CD8-positive, alpha-beta T cell (primary cell): ENCODE measurements at regions of chr10 and their contacts with region 1.

Region 1: GRCh38 chr10:70221030-70221429 is 12.2 kb downstream of the PPA1 start:
- DNase-seq: peak in 1 of 9 experiments; percentile 9
- ATAC-seq: no peak
- H3K4me3 ChIP-seq: no peak overlapping the region
- H3K4me3 Mint-ChIP-seq: no peak overlapping the region
- H3K27ac ChIP-seq: peak overlapping the region in 1 of 2 experiments; percentile 36
- H3K27ac Mint-ChIP-seq: peak overlapping the region; percentile 55
- H3K4me1 ChIP-seq: peaks cover 4% of the 10 kb centered on the region
- H3K4me1 Mint-ChIP-seq: peaks cover 14% of the 10 kb centered on the region
- H3K27me3 ChIP-seq: no peaks in the 10 kb centered on the region
- H3K27me3 Mint-ChIP-seq: no peaks in the 10 kb centered on the region
- CTCF ChIP-seq: no peak

Region 2: DNA sequence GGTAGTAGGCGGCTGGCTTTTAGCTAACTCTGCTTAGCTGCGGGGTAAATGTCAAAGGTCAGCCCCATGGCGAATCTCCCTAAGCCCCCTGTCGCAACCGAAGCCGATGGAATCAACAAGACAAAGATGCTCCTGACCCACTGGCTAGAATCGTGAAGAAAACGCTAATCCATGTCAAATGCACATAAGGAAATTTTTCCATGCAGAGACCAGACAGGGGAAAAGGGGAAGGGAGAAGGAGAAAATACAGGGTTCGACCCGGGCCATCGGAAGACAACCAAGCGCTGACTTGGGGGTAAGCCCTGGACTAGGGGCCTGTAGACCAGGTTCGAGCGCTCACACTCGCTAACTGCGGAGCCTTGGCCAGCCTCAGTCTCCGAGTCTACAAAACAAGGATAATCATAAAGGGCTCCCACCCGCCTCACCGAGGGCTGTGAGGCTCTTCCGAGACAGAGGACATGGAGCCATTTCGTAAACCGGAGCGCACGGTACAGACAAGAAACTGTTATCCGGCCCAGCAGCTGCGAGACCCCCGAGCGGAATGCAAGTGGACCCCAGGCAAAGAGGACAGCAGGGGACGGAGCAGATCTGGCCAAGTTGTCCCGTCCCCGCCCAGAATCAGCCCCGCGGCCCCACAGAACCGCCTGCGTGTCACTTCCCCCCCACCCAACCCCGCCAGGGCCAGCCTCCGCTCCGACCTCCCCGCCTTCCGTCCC is 51.2 kb before region 1 on chr10:
- CTCF ChIA-PET with region 1: interaction called, 10 read pairs
- POLR2A ChIA-PET with region 1: no interaction called
- intact Hi-C with region 1: no loop called
- DNase-seq: peak in 3 of 9 experiments; percentile 28 to 51 (median 29)
- ATAC-seq: peak; percentile 13
- H3K4me3 ChIP-seq: peak overlapping the region; percentile 65 to 90
- H3K4me3 Mint-ChIP-seq: peak overlapping the region; percentile 94
- H3K27ac ChIP-seq: peak overlapping the region; percentile 83 to 94
- H3K27ac Mint-ChIP-seq: peak overlapping the region; percentile 97
- H3K4me1 ChIP-seq: peaks cover 57% of the 10 kb centered on the region
- H3K4me1 Mint-ChIP-seq: peaks cover 60% of the 10 kb centered on the region
- H3K27me3 ChIP-seq: no peaks in the 10 kb centered on the region
- H3K27me3 Mint-ChIP-seq: no peaks in the 10 kb centered on the region
- CTCF ChIP-seq: no peak

Region 3: GRCh38 chr10:70267161-70267933 is 46.3 kb after region 1 on chr10:
- CTCF ChIA-PET with region 1: interaction called, 16 read pairs
- POLR2A ChIA-PET with region 1: no interaction called
- intact Hi-C with region 1: loop called (anchors 5 to 10 kb)
- DNase-seq: peak in 3 of 9 experiments; percentile 14 to 19 (median 14)
- ATAC-seq: no peak
- H3K4me3 ChIP-seq: no peak overlapping the region
- H3K4me3 Mint-ChIP-seq: no peak overlapping the region
- H3K27ac ChIP-seq: no peak overlapping the region
- H3K27ac Mint-ChIP-seq: peak overlapping the region; percentile 55
- H3K4me1 ChIP-seq: no peaks in the 10 kb centered on the region
- H3K4me1 Mint-ChIP-seq: peaks cover under 1% of the 10 kb centered on the region
- H3K27me3 ChIP-seq: no peaks in the 10 kb centered on the region
- H3K27me3 Mint-ChIP-seq: peaks cover 3% of the 10 kb centered on the region
- CTCF ChIP-seq: no peak

Region 4: DNA sequence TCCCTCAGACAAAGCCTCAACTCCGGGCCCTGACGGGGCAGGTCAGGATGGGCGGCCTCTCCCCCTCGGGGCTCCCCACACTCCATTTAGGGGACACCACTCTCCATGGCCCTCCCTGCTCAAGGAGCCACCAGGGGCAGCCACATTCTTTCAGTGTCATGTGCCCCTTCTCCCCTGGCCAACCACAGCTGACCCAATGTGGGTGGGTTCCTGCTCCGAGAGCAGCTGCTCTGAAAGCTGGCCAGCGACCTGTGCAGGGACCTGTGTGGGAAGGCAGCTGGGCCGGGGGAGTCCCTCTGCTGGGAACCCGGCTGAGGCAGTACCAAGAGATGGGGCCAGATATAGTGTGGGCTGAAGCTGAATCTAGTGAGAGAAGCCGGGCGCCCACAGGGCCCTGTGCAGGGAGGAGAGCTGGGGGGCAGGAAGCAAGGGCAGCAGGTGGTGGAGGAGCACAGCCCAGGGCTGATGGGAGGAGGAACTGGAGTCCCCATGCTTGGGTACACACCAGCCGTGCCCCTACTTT is 103.4 kb after region 1 on chr10:
- CTCF ChIA-PET with region 1: interaction called, 10 read pairs
- POLR2A ChIA-PET with region 1: interaction called, 3 read pairs
- intact Hi-C with region 1: no loop called
- DNase-seq: peak in 6 of 9 experiments; percentile 17 to 70 (median 32)
- ATAC-seq: peak; percentile 60
- H3K4me3 ChIP-seq: no peak overlapping the region
- H3K4me3 Mint-ChIP-seq: peak overlapping the region; percentile 18
- H3K27ac ChIP-seq: peak overlapping the region; percentile 14 to 78
- H3K27ac Mint-ChIP-seq: peak overlapping the region; percentile 96
- H3K4me1 ChIP-seq: peaks cover 40% of the 10 kb centered on the region
- H3K4me1 Mint-ChIP-seq: peaks cover 39% of the 10 kb centered on the region
- H3K27me3 ChIP-seq: no peaks in the 10 kb centered on the region
- H3K27me3 Mint-ChIP-seq: no peaks in the 10 kb centered on the region
- CTCF ChIP-seq: no peak

Region 5: GRCh38 chr10:70355051-70356021 is 134.3 kb after region 1 on chr10:
- CTCF ChIA-PET with region 1: interaction called, 370 read pairs
- POLR2A ChIA-PET with region 1: no interaction called
- intact Hi-C with region 1: no loop called
- DNase-seq: peak in 2 of 9 experiments; percentile 20 to 61
- ATAC-seq: no peak
- H3K4me3 ChIP-seq: peak overlapping the region in 1 of 2 experiments; percentile 41
- H3K4me3 Mint-ChIP-seq: peak overlapping the region; percentile 75
- H3K27ac ChIP-seq: no peak overlapping the region
- H3K27ac Mint-ChIP-seq: no peak overlapping the region
- H3K4me1 ChIP-seq: no peaks in the 10 kb centered on the region
- H3K4me1 Mint-ChIP-seq: peaks cover 9% of the 10 kb centered on the region
- H3K27me3 ChIP-seq: no peaks in the 10 kb centered on the region
- H3K27me3 Mint-ChIP-seq: no peaks in the 10 kb centered on the region
- CTCF ChIP-seq: no peak

Region 6: GRCh38 chr10:70540089-70540788 is 319.2 kb after region 1 on chr10:
- CTCF ChIA-PET with region 1: no interaction called
- POLR2A ChIA-PET with region 1: no interaction called
- intact Hi-C with region 1: loop called in 1 of 2 experiments (anchors 5 kb)
- DNase-seq: peak in 3 of 9 experiments; percentile 18 to 44 (median 37)
- ATAC-seq: peak; percentile 38
- H3K4me3 ChIP-seq: no peak overlapping the region
- H3K4me3 Mint-ChIP-seq: no peak overlapping the region
- H3K27ac ChIP-seq: no peak overlapping the region
- H3K27ac Mint-ChIP-seq: no peak overlapping the region
- H3K4me1 ChIP-seq: no peaks in the 10 kb centered on the region
- H3K4me1 Mint-ChIP-seq: no peaks in the 10 kb centered on the region
- H3K27me3 ChIP-seq: no peaks in the 10 kb centered on the region
- H3K27me3 Mint-ChIP-seq: no peaks in the 10 kb centered on the region
- CTCF ChIP-seq: peak; percentile 16